ENCODE measurements at regions of chr9 and their contacts with region 1.

Region 1: DNA sequence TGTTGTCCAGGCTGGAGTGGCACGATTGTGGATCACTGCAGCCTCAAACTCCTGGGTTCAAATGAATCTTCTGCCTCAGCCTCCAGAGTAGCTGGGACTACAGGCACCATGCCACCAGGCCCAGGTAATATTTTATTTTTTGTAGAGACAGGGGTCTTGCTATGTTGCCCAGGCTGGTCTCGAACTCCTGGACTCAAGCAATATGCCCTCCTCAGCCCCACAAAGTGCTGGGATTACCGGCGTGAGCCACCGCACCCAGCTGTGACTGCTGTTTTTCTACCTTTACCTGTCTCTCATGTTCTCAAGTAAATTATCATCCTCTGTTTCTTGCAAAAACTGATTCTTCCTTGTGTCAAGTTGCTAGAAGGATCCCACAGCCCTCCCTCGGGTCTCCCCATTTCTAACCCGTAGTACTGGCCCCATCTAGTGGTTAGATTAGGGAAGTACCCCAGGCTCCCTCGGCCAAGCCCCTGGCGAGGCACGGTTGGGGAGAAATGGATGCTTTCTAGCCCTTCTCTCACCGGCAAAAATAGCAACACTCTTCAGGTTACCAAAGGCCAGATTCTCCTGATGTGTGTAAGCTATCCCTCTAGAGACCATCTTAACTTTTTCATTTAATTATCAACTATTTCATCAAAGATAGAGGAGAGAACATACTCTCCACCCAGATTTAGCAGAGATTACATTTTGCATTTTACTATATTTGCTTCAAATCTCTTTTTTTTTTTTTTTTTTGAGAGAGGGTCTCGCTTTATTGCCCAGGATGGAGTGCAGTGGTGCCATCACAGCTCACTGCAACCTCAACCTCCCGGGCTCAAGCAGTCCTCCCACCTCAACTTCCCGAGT is 19.2 kb upstream of the TOR1B start:
- DNase-seq: peak; percentile 54 to 73 (median 70)
- ATAC-seq: peak; percentile 46 to 95 (median 93)
- H3K4me3 ChIP-seq: no peak overlapping the region
- H3K27ac ChIP-seq: no peak overlapping the region
- H3K4me1 ChIP-seq: peaks cover 0 to 5% (median 0%) of the 10 kb centered on the region in 12 donors
- H3K27me3 ChIP-seq: peaks cover 0 to 10% (median 0%) of the 10 kb centered on the region in 9 donors
- CTCF ChIP-seq: peak; percentile 77 to 97 (median 91)
- POLR2A ChIP-seq: no peak

Region 2: DNA sequence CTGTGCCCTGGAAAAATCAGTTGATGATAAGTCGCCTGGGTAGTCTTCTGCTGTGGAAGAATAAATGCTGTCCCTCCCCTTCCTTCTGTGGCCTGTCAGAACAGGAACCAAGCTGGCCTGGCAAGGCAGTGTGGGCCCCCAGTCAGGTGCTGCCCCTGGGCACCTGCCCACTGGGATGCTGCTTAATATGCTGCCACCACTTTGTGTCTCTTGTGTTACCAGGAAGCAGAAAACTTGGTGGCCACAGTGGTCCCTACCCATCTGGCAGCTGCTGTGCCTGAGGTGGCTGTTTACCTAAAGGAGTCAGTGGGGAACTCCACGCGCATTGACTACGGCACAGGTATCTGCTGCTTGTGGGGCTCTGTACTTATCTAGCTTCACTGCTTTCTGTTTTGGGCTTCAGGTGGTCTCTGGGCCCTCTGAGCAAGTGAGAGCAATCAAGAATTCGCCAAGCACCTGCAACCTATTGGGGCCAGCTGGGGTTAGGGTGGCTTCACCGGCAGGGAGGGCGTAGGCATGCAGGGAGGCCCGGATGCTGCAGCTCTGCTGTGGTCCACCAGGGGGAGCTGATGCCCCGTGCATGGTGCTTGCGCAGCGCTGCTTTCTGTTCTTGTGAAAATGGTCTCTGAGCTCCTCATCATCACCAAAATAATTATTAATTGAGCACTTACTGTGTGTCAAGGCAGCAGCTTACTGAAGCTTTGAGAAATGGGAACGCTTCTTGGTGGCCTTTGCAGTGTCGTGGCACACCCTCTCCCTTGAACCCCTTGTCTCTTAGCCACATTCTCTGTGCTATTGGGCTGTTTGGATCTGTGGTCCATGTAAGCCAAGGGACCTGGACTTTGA is 652.2 kb before region 1 on chr9:
- intact Hi-C with region 1: loop called in 9 of 10 experiments (anchors 2 to 5 kb)
- DNase-seq: peak; percentile 75 to 87 (median 78)
- ATAC-seq: peak; percentile 55 to 88 (median 86)
- H3K4me3 ChIP-seq: no peak overlapping the region
- H3K27ac ChIP-seq: no peak overlapping the region
- H3K4me1 ChIP-seq: peaks cover 0 to 17% (median 0%) of the 10 kb centered on the region in 12 donors
- H3K27me3 ChIP-seq: no peaks in the 10 kb centered on the region
- CTCF ChIP-seq: peak; percentile 92 to 99 (median 98)
- POLR2A ChIP-seq: no peak

Region 3: GRCh38 chr9:129641746-129642513 is 141.8 kb before region 1 on chr9 and contains the start of gene ASB6:
- intact Hi-C with region 1: loop called (anchors 2 to 5 kb)
- DNase-seq: peak; percentile 98 to 99 (median 98)
- ATAC-seq: peak; percentile 93 to 97 (median 95)
- H3K4me3 ChIP-seq: peak within 1 kb of the TSS; percentile 69 to 100 (median 95)
- H3K27ac ChIP-seq: peak within 1 kb of the TSS; percentile 55 to 85 (median 82)
- H3K4me1 ChIP-seq: peaks cover 0 to 26% (median 21%) of the 10 kb centered on the region in 12 donors
- H3K27me3 ChIP-seq: no peaks in the 10 kb centered on the region
- CTCF ChIP-seq: peak; percentile 97 to 100 (median 100)
- POLR2A ChIP-seq: peak in 1 of 2 donors; percentile 77
- total RNA-seq, gene ASB6: 7.5 to 22.5 (median 10.3) TPM

Region 4: GRCh38 chr9:129726322-129727160 is 57.2 kb before region 1 on chr9:
- intact Hi-C with region 1: loop called in 2 of 10 experiments (anchors 1 to 5 kb)
- DNase-seq: peak; percentile 75 to 86 (median 78)
- ATAC-seq: peak; percentile 78 to 95 (median 89)
- H3K4me3 ChIP-seq: peak overlapping the region in 5 of 12 donors; percentile 3 to 38 (median 30)
- H3K27ac ChIP-seq: peak overlapping the region in 5 of 12 donors; percentile 31 to 52 (median 42)
- H3K4me1 ChIP-seq: peaks cover 0 to 18% (median 6%) of the 10 kb centered on the region in 12 donors
- H3K27me3 ChIP-seq: peaks cover 0 to 11% (median 0%) of the 10 kb centered on the region in 9 donors
- CTCF ChIP-seq: peak; percentile 85 to 96 (median 92)
- POLR2A ChIP-seq: no peak

Region 5: GRCh38 chr9:129737479-129738274 is 46.1 kb before region 1 on chr9:
- intact Hi-C with region 1: loop called (anchors 1 to 5 kb)
- DNase-seq: peak; percentile 81 to 91 (median 84)
- ATAC-seq: peak; percentile 80 to 94 (median 93)
- H3K4me3 ChIP-seq: peak overlapping the region; percentile 17 to 79 (median 63)
- H3K27ac ChIP-seq: peak overlapping the region in 9 of 12 donors; percentile 3 to 65 (median 48)
- H3K4me1 ChIP-seq: peaks cover 0 to 11% (median 5%) of the 10 kb centered on the region in 12 donors
- H3K27me3 ChIP-seq: peaks cover 0 to 6% (median 0%) of the 10 kb centered on the region in 9 donors
- CTCF ChIP-seq: peak; percentile 94 to 98 (median 97)
- POLR2A ChIP-seq: no peak

Region 6: GRCh38 chr9:129875181-129875611 is 91.5 kb after region 1 on chr9:
- intact Hi-C with region 1: no loop called
- DNase-seq: no peak
- ATAC-seq: no peak
- H3K4me3 ChIP-seq: no peak overlapping the region
- H3K27ac ChIP-seq: no peak overlapping the region
- H3K4me1 ChIP-seq: no peaks in the 10 kb centered on the region
- H3K27me3 ChIP-seq: no peaks in the 10 kb centered on the region
- CTCF ChIP-seq: no peak
- POLR2A ChIP-seq: no peak

Measured in heart left ventricle (tissue), 16 donors.